Psoas muscle (tissue), 8 donors: ENCODE measurements at regions of chr17 and their contacts with region 1.

Region 1: DNA sequence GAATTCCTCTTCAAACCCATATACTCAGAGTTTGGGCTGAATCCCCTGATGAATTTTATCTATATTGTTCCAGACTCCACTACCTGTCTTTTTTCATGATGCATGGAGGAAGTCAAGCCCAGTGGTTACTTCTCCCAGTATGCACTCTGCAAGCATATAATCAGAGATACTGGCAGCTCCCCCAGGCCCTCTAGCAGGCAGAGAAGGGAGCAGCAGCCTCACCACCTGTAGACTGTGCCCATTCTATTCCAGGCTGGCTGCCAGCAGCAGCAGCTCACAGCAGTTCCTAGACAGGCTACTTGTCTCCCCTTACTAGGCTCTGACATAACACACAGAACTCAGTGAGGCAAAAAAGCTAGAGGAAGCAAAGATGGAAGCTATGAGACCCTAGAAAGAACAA is 3.4 kb downstream of the MKS1 start:
- DNase-seq: no peak
- ATAC-seq: no peak
- H3K4me3 ChIP-seq: no peak overlapping the region
- H3K27ac ChIP-seq: no peak overlapping the region
- H3K4me1 ChIP-seq: no peaks in the 10 kb centered on the region
- H3K27me3 ChIP-seq: no peaks in the 10 kb centered on the region
- CTCF ChIP-seq: no peak

Region 2: GRCh38 chr17:57114085-57114673 is 1101.5 kb before region 1 on chr17:
- intact Hi-C with region 1: no loop called
- DNase-seq: peak; percentile 46 to 78
- ATAC-seq: peak in 2 of 4 donors; percentile 34 to 37
- H3K4me3 ChIP-seq: no peak overlapping the region
- H3K27ac ChIP-seq: no peak overlapping the region
- H3K4me1 ChIP-seq: peaks cover 28% of the 10 kb centered on the region
- H3K27me3 ChIP-seq: no peaks in the 10 kb centered on the region
- CTCF ChIP-seq: peak; percentile 82

Region 3: DNA sequence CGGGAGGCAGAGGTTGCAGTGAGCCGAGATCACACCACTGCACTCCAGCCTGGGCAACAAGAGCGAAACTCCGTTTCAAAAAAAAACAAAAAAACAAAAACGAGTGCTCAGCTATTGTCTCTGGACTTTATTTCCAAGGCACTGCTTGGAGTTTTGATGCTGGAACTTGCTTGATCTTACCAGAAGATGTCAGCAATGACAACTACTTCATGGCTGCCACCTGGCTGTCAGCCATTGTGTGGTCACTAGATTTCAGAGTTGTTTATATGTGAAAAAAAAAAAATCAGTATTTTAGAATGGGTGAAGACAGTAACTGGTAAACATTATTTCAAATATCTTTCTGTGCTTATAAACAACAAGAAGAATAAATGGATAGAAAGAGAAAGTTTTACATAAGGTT is 93.8 kb before region 1 on chr17:
- intact Hi-C with region 1: no loop called
- DNase-seq: no peak
- ATAC-seq: no peak
- H3K4me3 ChIP-seq: no peak overlapping the region
- H3K27ac ChIP-seq: no peak overlapping the region
- H3K4me1 ChIP-seq: no peaks in the 10 kb centered on the region
- H3K27me3 ChIP-seq: peaks cover 0 to 4% (median 0%) of the 10 kb centered on the region in 3 donors
- CTCF ChIP-seq: no peak

Region 4: GRCh38 chr17:58249270-58250133 is 33.8 kb after region 1 on chr17:
- intact Hi-C with region 1: loop called in 1 of 2 experiments (anchors 1 kb)
- DNase-seq: peak; percentile 72 to 80
- ATAC-seq: peak; percentile 90 to 98 (median 93)
- H3K4me3 ChIP-seq: peak overlapping the region; percentile 64
- H3K27ac ChIP-seq: no peak overlapping the region
- H3K4me1 ChIP-seq: peaks cover 8% of the 10 kb centered on the region
- H3K27me3 ChIP-seq: peaks cover 0 to 21% (median 2%) of the 10 kb centered on the region in 3 donors
- CTCF ChIP-seq: peak; percentile 88